Caco-2 (cell line): ENCODE measurements at regions of chr22 and their contacts with region 1.

Region 1: GRCh38 chr22:40636380-40637182 is at the start of gene MRTFA:
- DNase-seq: peak; percentile 100
- H3K4me3 ChIP-seq: peak within 1 kb of the TSS; percentile 95
- H3K4me3 Mint-ChIP-seq: peak within 1 kb of the TSS; percentile 90
- H3K27ac Mint-ChIP-seq: peak within 1 kb of the TSS; percentile 88
- H3K4me1 ChIP-seq: peaks cover 10% of the 10 kb centered on the region; the same call in 1 of the 2 replicates
- H3K4me1 Mint-ChIP-seq: peaks cover 23% of the 10 kb centered on the region
- H3K27me3 ChIP-seq: no peaks in the 10 kb centered on the region
- H3K27me3 Mint-ChIP-seq: no peaks in the 10 kb centered on the region
- CTCF ChIP-seq: no peak
- total RNA-seq, gene MRTFA: 38.7 and 44.8 TPM in 2 replicates

Region 2: DNA sequence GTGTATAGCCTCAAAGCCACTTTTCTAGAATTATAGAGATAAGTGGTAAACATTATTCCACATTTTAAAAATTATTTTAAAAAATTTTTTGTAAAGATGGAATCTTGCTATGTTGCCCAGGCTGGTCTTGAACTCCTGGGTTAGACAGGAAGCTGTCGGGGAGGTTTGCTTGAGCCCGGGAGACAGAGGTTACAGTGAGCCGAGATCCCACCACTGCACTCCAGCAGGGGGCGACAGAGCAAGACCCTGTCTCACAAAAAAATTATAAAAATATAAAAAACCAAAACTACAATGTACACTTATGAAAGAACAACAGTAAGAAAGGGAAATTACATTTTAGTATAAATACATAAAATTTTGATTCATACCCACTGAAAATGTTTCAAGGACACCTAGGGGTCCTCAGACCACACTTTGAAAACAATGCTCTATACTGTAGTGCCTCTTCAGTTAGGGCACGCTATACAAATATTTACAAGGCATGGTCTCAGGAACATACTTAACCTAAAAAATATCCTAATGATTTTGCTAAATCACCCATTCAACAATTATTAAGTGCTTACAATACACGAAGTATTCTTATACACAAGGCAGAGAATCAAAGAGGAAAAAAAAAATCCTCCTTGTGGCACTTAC is 111.2 kb before region 1 on chr22:
- CTCF ChIA-PET with region 1: interaction called, 12 read pairs
- POLR2A ChIA-PET with region 1: no interaction called
- intact Hi-C with region 1: no loop called
- DNase-seq: peak in 1 of 2 experiments; percentile 68
- H3K4me3 ChIP-seq: no peak overlapping the region
- H3K4me3 Mint-ChIP-seq: no peak overlapping the region
- H3K27ac Mint-ChIP-seq: no peak overlapping the region
- H3K4me1 ChIP-seq: no peaks in the 10 kb centered on the region
- H3K4me1 Mint-ChIP-seq: no peaks in the 10 kb centered on the region
- H3K27me3 ChIP-seq: no peaks in the 10 kb centered on the region
- H3K27me3 Mint-ChIP-seq: no peaks in the 10 kb centered on the region
- CTCF ChIP-seq: peak; percentile 62 to 68

Region 3: DNA sequence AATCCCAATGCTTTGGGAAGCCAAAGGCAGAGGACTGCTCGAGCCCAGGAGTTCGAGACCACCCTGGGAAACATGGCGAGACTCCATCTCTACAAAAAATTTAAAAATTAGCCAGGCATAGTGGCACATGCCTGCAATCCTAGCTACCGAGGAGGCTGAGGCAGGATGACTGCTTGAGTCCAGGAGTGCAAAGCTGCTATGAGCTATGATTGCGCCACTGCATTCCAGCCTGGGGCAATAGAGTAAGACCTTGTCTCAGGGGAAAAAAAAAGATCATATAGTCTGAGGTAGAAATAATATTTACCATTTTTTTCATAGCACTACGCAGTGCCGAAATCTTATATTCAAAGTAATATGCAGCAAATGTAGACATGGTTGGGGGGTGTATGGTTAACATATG is 47.9 kb before region 1 on chr22:
- CTCF ChIA-PET with region 1: no interaction called
- POLR2A ChIA-PET with region 1: interaction called, 3 read pairs
- intact Hi-C with region 1: loop called (anchors 2 kb)
- DNase-seq: peak; percentile 83 to 89
- H3K4me3 ChIP-seq: no peak overlapping the region
- H3K4me3 Mint-ChIP-seq: no peak overlapping the region
- H3K27ac Mint-ChIP-seq: peak overlapping the region; percentile 83
- H3K4me1 ChIP-seq: peaks cover 42% of the 10 kb centered on the region
- H3K4me1 Mint-ChIP-seq: peaks cover 42% of the 10 kb centered on the region
- H3K27me3 ChIP-seq: no peaks in the 10 kb centered on the region
- H3K27me3 Mint-ChIP-seq: no peaks in the 10 kb centered on the region
- CTCF ChIP-seq: no peak

Region 4: DNA sequence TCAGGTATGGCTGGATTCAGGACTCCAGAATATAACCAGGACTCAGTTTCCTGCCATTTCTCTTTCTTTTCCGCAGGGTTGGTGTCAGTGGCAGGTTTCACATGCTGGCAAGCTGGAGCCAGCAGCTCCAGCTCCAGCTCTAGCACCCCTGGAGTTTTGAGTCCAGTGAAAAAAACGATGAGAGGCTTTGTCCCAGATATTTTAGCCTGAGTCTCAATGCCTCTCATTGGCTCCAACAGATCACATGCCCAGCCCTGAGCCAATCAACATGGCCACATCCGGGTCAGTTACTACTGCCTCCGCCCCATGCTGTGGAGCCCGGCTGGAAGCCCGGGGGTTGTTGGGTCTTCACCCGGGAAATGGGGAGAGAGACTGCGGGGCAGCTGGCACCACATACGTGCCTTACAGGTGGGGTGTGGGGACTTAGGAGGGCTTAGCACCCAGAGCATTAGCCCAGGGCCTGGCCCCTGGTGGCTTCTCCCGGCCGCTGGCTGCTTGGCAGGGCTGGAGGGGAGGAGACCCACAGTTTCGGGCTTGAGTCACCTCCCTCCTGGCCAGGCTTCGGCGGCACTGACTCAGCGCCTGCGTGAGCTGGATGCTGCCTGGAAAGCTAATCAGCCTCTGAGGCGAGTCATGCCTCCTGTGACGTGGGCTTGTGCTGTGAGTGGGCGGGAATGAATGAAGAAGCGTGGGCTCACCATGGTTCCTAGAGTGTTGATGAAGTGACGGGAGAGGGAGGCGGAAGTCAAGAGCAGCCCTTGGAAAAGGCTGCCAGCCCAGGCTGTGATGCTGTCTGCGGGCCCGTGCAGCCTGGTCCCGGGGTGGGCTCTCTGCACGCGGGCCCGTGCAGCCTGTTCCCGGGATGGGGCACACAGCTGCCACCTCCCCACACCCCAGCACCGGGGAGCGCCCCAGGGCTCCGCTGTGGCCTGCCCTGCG is 15.3 kb after region 1 on chr22:
- CTCF ChIA-PET with region 1: interaction called, 5 read pairs
- POLR2A ChIA-PET with region 1: interaction called, 14 read pairs
- intact Hi-C with region 1: no loop called
- DNase-seq: peak; percentile 93 to 94
- H3K4me3 ChIP-seq: peak overlapping the region; percentile 73
- H3K4me3 Mint-ChIP-seq: peak overlapping the region; percentile 86
- H3K27ac Mint-ChIP-seq: peak overlapping the region; percentile 98
- H3K4me1 ChIP-seq: peaks cover 13% of the 10 kb centered on the region
- H3K4me1 Mint-ChIP-seq: peaks cover 9% of the 10 kb centered on the region
- H3K27me3 ChIP-seq: no peaks in the 10 kb centered on the region
- H3K27me3 Mint-ChIP-seq: no peaks in the 10 kb centered on the region
- CTCF ChIP-seq: no peak

Region 5: DNA sequence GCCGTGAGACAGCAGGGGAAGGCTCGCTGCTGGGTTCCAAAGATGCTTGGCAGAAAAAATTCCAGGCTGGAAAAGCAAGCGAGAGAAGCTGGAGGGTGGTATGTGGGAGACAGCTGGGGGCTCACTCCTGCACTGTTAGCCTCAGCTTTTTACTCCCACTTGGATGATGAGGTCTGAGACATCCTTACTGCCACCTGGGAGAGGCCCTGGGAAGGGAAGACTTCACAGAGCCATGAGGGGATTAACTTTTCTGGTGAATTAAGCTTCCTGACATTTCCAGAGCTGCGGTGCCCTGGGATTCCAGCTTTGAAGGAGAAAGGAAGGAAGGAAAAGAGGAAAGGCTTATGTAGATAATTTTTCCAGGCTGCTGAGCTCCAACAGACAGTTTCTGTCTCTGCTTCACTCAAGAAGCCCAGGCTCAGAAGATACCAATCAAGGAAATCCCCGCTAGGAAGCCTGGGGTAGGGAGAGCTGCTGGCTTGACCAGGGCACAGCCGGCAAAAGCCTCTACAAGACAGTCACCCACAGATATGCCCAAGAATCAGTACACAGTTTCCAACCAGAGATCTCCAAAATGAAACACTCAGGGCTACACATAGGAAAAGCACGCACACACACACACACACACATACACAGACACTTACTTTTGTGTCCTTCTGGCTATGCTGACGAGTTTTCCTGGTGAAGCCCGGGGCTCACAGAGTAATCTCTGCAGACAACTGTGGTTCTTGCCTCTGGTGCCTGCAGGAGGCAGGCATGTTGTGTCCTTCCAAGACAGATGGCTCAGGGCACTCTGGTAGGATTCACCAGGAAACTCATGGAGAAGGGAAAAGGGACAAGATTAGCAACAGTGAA is 43.6 kb after region 1 on chr22:
- CTCF ChIA-PET with region 1: no interaction called
- POLR2A ChIA-PET with region 1: no interaction called
- intact Hi-C with region 1: no loop called
- DNase-seq: no peak
- H3K4me3 ChIP-seq: no peak overlapping the region
- H3K4me3 Mint-ChIP-seq: no peak overlapping the region
- H3K27ac Mint-ChIP-seq: no peak overlapping the region
- H3K4me1 ChIP-seq: no peaks in the 10 kb centered on the region
- H3K4me1 Mint-ChIP-seq: peaks cover 12% of the 10 kb centered on the region
- H3K27me3 ChIP-seq: no peaks in the 10 kb centered on the region
- H3K27me3 Mint-ChIP-seq: no peaks in the 10 kb centered on the region
- CTCF ChIP-seq: no peak